Caco-2 (cell line): ENCODE measurements at regions of chr2 and their contacts with region 1.

Region 1: DNA sequence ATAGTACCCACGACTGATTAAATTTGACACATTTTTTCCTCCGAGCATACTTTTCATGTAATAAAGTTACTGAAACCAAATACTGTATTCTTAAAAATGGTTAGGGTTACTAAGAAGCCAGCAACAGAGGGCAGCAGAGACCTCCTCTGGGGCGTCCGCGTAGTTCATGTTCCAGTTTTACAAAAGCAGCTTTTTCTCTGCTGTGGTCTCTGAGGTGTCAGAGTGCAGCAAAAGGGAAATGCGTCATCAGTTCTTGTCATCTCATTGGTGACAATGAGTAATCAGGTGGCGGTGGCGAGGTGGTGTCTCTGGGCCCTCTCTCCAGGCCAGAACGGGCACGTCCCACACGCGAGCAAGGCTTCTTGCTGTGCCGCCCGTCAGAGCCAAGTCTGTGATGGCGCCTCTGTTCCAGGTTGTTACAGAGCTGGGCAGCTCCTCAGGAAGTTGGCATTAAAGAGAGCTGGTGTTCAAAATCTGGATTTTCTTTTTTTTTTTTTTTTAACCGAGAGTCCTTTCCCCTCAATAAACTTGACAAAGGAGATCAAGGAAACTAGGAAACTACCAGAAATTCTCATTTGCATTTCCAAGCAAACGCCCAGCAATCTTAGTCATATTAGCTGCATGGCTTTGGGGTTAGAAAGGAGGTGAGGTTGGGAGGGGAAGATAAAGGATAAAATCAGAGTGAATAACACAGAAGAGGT is 98.6 kb upstream of the BZW1 start:
- DNase-seq: peak; percentile 88 to 92
- H3K4me3 ChIP-seq: peak overlapping the region; percentile 18
- H3K4me3 Mint-ChIP-seq: peak overlapping the region; percentile 70
- H3K27ac Mint-ChIP-seq: peak overlapping the region; percentile 95
- H3K4me1 ChIP-seq: peaks cover 8% of the 10 kb centered on the region; the same call in 1 of the 2 replicates
- H3K4me1 Mint-ChIP-seq: no peaks in the 10 kb centered on the region
- H3K27me3 ChIP-seq: no peaks in the 10 kb centered on the region
- H3K27me3 Mint-ChIP-seq: no peaks in the 10 kb centered on the region
- CTCF ChIP-seq: peak; percentile 84 to 86

Region 2: GRCh38 chr2:200735061-200735460 is 21.9 kb after region 1 on chr2:
- CTCF ChIA-PET with region 1: interaction called, 46 read pairs
- POLR2A ChIA-PET with region 1: interaction called, 6 read pairs
- intact Hi-C with region 1: loop called (anchors 1 kb)
- DNase-seq: no peak
- H3K4me3 ChIP-seq: no peak overlapping the region
- H3K4me3 Mint-ChIP-seq: no peak overlapping the region
- H3K27ac Mint-ChIP-seq: no peak overlapping the region
- H3K4me1 ChIP-seq: no peaks in the 10 kb centered on the region; the same call in 1 of the 2 replicates
- H3K4me1 Mint-ChIP-seq: peaks cover 8% of the 10 kb centered on the region
- H3K27me3 ChIP-seq: no peaks in the 10 kb centered on the region; the same call in 1 of the 2 replicates
- H3K27me3 Mint-ChIP-seq: no peaks in the 10 kb centered on the region
- CTCF ChIP-seq: no peak

Region 3: GRCh38 chr2:200756618-200757321 is 43.6 kb after region 1 on chr2:
- CTCF ChIA-PET with region 1: interaction called, 7 read pairs
- POLR2A ChIA-PET with region 1: no interaction called
- intact Hi-C with region 1: loop called (anchors 1 kb)
- DNase-seq: peak; percentile 85 to 90
- H3K4me3 ChIP-seq: no peak overlapping the region
- H3K4me3 Mint-ChIP-seq: peak overlapping the region; percentile 65
- H3K27ac Mint-ChIP-seq: peak overlapping the region; percentile 80
- H3K4me1 ChIP-seq: peaks cover 51% of the 10 kb centered on the region
- H3K4me1 Mint-ChIP-seq: peaks cover 54% of the 10 kb centered on the region
- H3K27me3 ChIP-seq: no peaks in the 10 kb centered on the region
- H3K27me3 Mint-ChIP-seq: no peaks in the 10 kb centered on the region
- CTCF ChIP-seq: no peak

Region 4: GRCh38 chr2:200811336-200812121 is 98.4 kb after region 1 on chr2 and contains the start of gene BZW1:
- CTCF ChIA-PET with region 1: no interaction called
- POLR2A ChIA-PET with region 1: no interaction called
- intact Hi-C with region 1: loop called (anchors 1 kb)
- DNase-seq: peak; percentile 97 to 98
- H3K4me3 ChIP-seq: peak within 1 kb of the TSS; percentile 99
- H3K4me3 Mint-ChIP-seq: peak within 1 kb of the TSS; percentile 89
- H3K27ac Mint-ChIP-seq: peak within 1 kb of the TSS; percentile 98
- H3K4me1 ChIP-seq: peaks cover 22% of the 10 kb centered on the region
- H3K4me1 Mint-ChIP-seq: peaks cover 16% of the 10 kb centered on the region
- H3K27me3 ChIP-seq: no peaks in the 10 kb centered on the region
- H3K27me3 Mint-ChIP-seq: no peaks in the 10 kb centered on the region
- CTCF ChIP-seq: no peak
- total RNA-seq, gene BZW1: 322 and 325 TPM in 2 replicates

Region 5: GRCh38 chr2:200888704-200889625 is 175.8 kb after region 1 on chr2 and contains the starts of genes NIF3L1 and PPIL3:
- CTCF ChIA-PET with region 1: interaction called, 3 read pairs
- POLR2A ChIA-PET with region 1: no interaction called
- intact Hi-C with region 1: loop called (anchors 1 kb)
- DNase-seq: peak; percentile 98 to 99
- H3K4me3 ChIP-seq: peak within 1 kb of the TSS; percentile 56
- H3K4me3 Mint-ChIP-seq: peak within 1 kb of the TSS; percentile 89
- H3K27ac Mint-ChIP-seq: peak within 1 kb of the TSS; percentile 97
- H3K4me1 ChIP-seq: 0 out of 2 replicates have a peak, but pooled peaks cover 3% of the 10 kb centered on the region
- H3K4me1 Mint-ChIP-seq: peaks cover 19% of the 10 kb centered on the region
- H3K27me3 ChIP-seq: no peaks in the 10 kb centered on the region
- H3K27me3 Mint-ChIP-seq: no peaks in the 10 kb centered on the region
- CTCF ChIP-seq: no peak
- total RNA-seq, gene NIF3L1: 40.7 and 49.7 TPM in 2 replicates
- total RNA-seq, gene PPIL3: 17.6 and 25.0 TPM in 2 replicates